ENCODE measurements at regions of chr1 and their contacts with region 1.

Region 1: GRCh38 chr1:11681071-11681771 is at the start of gene MAD2L2:
- DNase-seq: peak; percentile 80 to 96 (median 87)
- ATAC-seq: peak; percentile 98
- H3K4me3 ChIP-seq: peak within 1 kb of the TSS; percentile 79
- H3K4me3 Mint-ChIP-seq: peak within 1 kb of the TSS; percentile 89 to 99 (median 96)
- H3K27ac ChIP-seq: peak within 1 kb of the TSS; percentile 86
- H3K27ac Mint-ChIP-seq: peak within 1 kb of the TSS; percentile 74 to 98 (median 89)
- H3K4me1 ChIP-seq: peaks cover 0 to 9% of the 10 kb centered on the region in 2 donors
- H3K4me1 Mint-ChIP-seq: peaks cover 6 to 28% (median 19%) of the 10 kb centered on the region in 7 donors
- H3K27me3 ChIP-seq: no peaks in the 10 kb centered on the region
- H3K27me3 Mint-ChIP-seq: peaks cover 0 to 12% (median 0%) of the 10 kb centered on the region in 5 donors
- total RNA-seq, gene MAD2L2: 17.1 to 53.3 (median 27.2) TPM

Region 2: DNA sequence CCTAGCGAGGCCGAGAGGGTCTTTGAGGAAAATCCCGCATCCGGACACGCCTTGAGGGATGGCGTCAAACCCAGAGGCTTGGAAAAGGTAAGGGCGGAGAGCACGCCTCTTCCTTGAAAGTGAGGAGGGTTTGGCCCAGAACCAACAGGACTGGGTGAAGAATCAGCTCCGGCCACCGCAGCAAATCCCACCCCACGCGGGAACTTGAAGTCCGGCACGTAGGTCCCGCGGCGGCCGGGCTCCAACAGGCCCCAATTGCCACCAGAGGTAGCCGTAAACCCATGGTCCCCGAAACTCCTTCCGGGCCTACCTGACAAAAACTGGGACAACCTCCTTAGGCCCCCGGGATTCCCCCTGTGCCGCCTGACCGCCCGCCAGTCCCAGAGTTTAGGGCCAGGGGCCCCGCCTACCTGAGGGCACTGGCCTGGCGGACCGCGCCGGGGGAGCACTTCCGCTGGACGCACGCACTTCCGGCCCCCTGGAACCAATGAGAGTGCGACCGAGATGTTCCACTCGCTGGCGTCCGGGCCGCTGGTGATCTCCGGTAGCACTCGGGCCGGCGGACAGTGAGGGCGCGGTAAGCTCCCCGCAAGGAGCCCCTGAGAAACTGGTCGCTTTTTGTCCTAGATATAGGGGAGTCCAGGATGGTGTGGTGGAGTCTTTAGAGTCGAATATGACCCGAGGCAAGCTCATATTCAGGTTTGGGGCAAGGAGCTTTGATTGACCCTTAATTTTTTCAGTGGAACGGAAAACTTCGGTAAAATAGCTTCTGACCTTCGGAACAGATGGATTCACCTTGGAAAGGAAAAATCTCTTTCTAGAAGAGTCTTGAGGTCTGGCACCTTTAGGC is 1738.1 kb before region 1 on chr1 and contains the starts of genes LZIC and NMNAT1:
- CTCF ChIA-PET with region 1: no interaction called
- POLR2A ChIA-PET with region 1: no interaction called
- intact Hi-C with region 1: loop called in 1 of 2 experiments (anchors 5 kb)
- DNase-seq: peak; percentile 71 to 92 (median 82)
- ATAC-seq: peak; percentile 98
- H3K4me3 ChIP-seq: peak within 1 kb of the TSS; percentile 71
- H3K4me3 Mint-ChIP-seq: peak within 1 kb of the TSS; percentile 91 to 98 (median 97)
- H3K27ac ChIP-seq: peak within 1 kb of the TSS; percentile 92
- H3K27ac Mint-ChIP-seq: peak within 1 kb of the TSS; percentile 93 to 99 (median 97)
- H3K4me1 ChIP-seq: peaks cover 0 to 9% of the 10 kb centered on the region in 2 donors
- H3K4me1 Mint-ChIP-seq: peaks cover 17 to 33% (median 26%) of the 10 kb centered on the region in 7 donors
- H3K27me3 ChIP-seq: no peaks in the 10 kb centered on the region
- H3K27me3 Mint-ChIP-seq: no peaks in the 10 kb centered on the region
- total RNA-seq, gene LZIC: 18.0 to 35.1 (median 31.0) TPM
- total RNA-seq, gene NMNAT1: 2.7 to 8.3 (median 7.5) TPM

Region 3: GRCh38 chr1:11661103-11661502 is 20.1 kb before region 1 on chr1:
- CTCF ChIA-PET with region 1: interaction called, 7 read pairs
- POLR2A ChIA-PET with region 1: interaction called, 13 read pairs
- intact Hi-C with region 1: loop called (anchors 1 kb)
- DNase-seq: no peak
- ATAC-seq: no peak
- H3K4me3 ChIP-seq: no peak overlapping the region
- H3K4me3 Mint-ChIP-seq: no peak overlapping the region
- H3K27ac ChIP-seq: no peak overlapping the region
- H3K27ac Mint-ChIP-seq: peak overlapping the region in 1 of 9 donors; percentile 75
- H3K4me1 ChIP-seq: peaks cover 0 to 5% of the 10 kb centered on the region in 2 donors
- H3K4me1 Mint-ChIP-seq: peaks cover 0 to 12% (median 6%) of the 10 kb centered on the region in 7 donors
- H3K27me3 ChIP-seq: no peaks in the 10 kb centered on the region
- H3K27me3 Mint-ChIP-seq: no peaks in the 10 kb centered on the region

Region 4: DNA sequence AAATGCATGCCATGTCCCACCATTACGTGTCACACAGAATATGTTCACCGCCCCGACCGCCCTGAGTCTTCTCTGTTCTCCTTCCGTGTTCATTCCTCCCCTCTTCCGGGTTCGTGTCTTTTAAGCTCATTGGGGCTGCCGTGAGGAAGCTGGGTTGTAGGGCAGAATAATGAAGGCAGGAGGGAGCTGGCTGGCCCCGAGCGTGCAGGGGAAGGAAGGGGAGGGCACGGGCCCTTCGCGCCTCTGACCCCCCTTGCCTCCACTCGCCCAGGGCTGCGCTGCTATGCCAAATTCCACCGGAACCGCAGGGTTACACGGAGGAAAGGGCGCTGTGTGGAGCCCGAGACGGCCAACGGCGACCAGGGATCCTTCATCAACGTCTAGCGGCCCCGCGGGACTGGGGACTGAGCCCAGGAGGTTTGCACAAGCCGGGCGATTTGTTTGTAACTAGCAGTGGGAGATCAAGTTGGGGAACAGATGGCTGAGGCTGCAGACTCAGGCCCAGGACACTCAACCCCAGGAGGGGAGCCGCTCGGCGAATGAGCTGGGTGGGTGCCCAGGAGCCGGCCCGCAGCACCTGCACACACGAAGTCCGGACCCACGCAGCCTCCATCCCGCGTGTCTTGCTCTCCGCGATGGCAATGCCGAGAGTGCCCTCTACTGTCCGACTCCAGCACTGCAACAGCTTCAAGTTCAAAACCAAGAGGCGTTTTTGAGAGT is 38.3 kb after region 1 on chr1:
- CTCF ChIA-PET with region 1: interaction called, 7 read pairs
- POLR2A ChIA-PET with region 1: interaction called, 11 read pairs
- intact Hi-C with region 1: loop called (anchors 1 to 5 kb)
- DNase-seq: peak; percentile 73 to 89 (median 82)
- ATAC-seq: peak; percentile 92
- H3K4me3 ChIP-seq: peak overlapping the region; percentile 66
- H3K4me3 Mint-ChIP-seq: peak overlapping the region; percentile 71 to 89 (median 86)
- H3K27ac ChIP-seq: peak overlapping the region; percentile 62
- H3K27ac Mint-ChIP-seq: peak overlapping the region; percentile 73 to 97 (median 93)
- H3K4me1 ChIP-seq: peaks cover 0 to 5% of the 10 kb centered on the region in 2 donors
- H3K4me1 Mint-ChIP-seq: peaks cover 8 to 21% (median 15%) of the 10 kb centered on the region in 7 donors
- H3K27me3 ChIP-seq: no peaks in the 10 kb centered on the region
- H3K27me3 Mint-ChIP-seq: peaks cover 0 to 10% (median 0%) of the 10 kb centered on the region in 5 donors

Region 5: GRCh38 chr1:11735854-11736745 is 54.9 kb after region 1 on chr1 and contains the start of gene AGTRAP:
- CTCF ChIA-PET with region 1: interaction called, 3 read pairs
- POLR2A ChIA-PET with region 1: interaction called, 5 read pairs
- intact Hi-C with region 1: loop called (anchors 1 to 2 kb)
- DNase-seq: peak; percentile 62 to 84 (median 71)
- ATAC-seq: peak; percentile 78
- H3K4me3 ChIP-seq: peak within 1 kb of the TSS; percentile 92
- H3K4me3 Mint-ChIP-seq: peak within 1 kb of the TSS; percentile 84 to 96 (median 92)
- H3K27ac ChIP-seq: peak within 1 kb of the TSS; percentile 79
- H3K27ac Mint-ChIP-seq: peak within 1 kb of the TSS; percentile 3 to 95 (median 83)
- H3K4me1 ChIP-seq: peaks cover 38 to 52% of the 10 kb centered on the region in 2 donors
- H3K4me1 Mint-ChIP-seq: peaks cover 51 to 80% (median 76%) of the 10 kb centered on the region in 7 donors
- H3K27me3 ChIP-seq: no peaks in the 10 kb centered on the region
- H3K27me3 Mint-ChIP-seq: no peaks in the 10 kb centered on the region
- total RNA-seq, gene AGTRAP: 28.2 to 82.5 (median 32.7) TPM

Region 6: DNA sequence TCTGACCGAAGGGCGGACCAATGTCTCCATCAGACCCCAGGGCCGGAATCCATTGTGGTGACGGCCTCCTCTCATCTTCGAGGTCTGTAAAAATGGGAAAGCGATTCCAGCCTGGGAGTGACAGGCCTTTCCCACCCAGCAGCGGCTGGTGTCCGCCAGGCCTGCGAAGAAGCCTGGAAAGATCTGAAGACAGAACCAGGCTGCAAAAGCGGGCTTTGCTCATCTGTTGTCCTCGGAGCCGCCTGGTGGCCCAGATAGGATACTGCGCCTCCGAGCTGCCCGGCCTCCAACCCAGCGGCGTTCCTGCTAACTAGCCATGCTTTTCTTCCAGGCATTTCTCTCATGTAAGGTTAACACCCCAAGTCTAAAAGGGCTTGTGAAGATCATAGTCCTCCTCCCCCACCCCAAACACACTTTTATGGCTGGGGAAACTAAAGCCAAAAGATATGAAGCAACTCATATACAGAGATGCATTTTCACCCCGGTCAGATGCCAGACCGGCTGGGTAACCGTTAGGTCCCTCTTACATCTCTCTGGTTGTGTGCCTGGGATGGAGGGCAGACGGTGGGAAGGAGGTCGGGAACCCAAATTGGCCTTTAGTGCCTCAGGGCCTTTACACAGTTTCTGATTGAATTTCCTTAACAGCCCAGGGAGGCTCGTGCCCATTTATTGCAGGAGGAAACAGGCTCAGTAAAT is 938.7 kb after region 1 on chr1:
- CTCF ChIA-PET with region 1: no interaction called
- POLR2A ChIA-PET with region 1: no interaction called
- intact Hi-C with region 1: no loop called
- DNase-seq: peak; percentile 64 to 83 (median 74)
- ATAC-seq: peak; percentile 69
- H3K4me3 ChIP-seq: peak overlapping the region; percentile 81
- H3K4me3 Mint-ChIP-seq: peak overlapping the region; percentile 90 to 99 (median 99)
- H3K27ac ChIP-seq: peak overlapping the region; percentile 86
- H3K27ac Mint-ChIP-seq: peak overlapping the region; percentile 62 to 98 (median 94)
- H3K4me1 ChIP-seq: peaks cover 22 to 35% of the 10 kb centered on the region in 2 donors
- H3K4me1 Mint-ChIP-seq: peaks cover 27 to 41% (median 38%) of the 10 kb centered on the region in 7 donors
- H3K27me3 ChIP-seq: no peaks in the 10 kb centered on the region
- H3K27me3 Mint-ChIP-seq: peaks cover 0 to 13% (median 0%) of the 10 kb centered on the region in 5 donors

Measured in naive thymus-derived CD4-positive, alpha-beta T cell (primary cell).